ENCODE measurements at regions of chr2 and their contacts with region 1.

Region 1: DNA sequence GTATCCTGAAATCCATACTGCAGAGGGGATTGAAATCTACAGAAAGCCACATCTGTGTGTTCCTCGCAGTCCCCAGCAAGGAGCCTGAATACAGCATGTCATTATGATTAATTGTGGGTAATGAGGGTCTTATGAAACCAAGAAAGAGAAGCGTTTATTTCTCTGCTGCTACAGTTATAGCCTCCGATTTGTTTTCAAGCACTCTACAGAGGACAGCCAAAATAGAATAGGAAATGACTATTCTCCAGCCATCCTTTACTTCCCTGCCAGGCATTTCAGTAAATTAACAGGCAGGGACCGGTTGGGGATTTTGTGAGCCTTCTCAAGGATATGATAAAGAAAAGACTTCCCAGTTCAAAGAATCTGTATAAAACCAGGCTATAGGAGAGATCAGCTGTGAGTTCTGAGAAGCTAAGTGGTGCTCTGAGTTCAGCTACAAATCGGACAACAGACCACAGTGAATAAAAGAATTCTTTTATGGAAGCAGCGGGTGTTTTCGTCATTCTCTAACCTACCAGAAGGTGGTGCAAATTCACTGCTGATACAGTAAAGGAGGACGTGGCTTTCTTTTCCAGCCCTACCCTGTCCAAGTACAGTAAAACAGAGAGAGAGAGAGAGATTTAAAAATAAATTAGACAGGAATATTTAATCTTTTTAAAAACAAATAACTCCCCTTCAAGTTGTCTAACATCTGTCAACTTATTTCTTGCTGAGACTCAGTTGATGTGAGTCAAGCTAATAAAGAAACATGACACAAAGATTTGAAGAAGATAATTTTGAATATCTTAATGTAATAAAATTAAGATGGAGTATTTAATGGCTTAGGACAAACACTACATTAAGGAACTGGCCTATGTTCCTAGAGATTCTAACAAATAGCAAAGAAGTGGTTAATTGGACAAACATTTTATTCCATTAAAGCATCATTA is 133.7 kb downstream of the INSIG2 start:
- DNase-seq: peak; percentile 49 to 64
- H3K4me3 ChIP-seq: no peak overlapping the region
- H3K27ac ChIP-seq: no peak overlapping the region
- H3K4me1 ChIP-seq: peaks cover 4% of the 10 kb centered on the region
- H3K27me3 ChIP-seq: no peaks in the 10 kb centered on the region
- CTCF ChIP-seq: peak; percentile 91

Region 2: GRCh38 chr2:117972425-117973138 is 249.3 kb before region 1 on chr2:
- CTCF ChIA-PET with region 1: no interaction called
- POLR2A ChIA-PET with region 1: no interaction called
- intact Hi-C with region 1: no loop called
- DNase-seq: peak in 1 of 2 experiments; percentile 44
- H3K4me3 ChIP-seq: no peak overlapping the region
- H3K27ac ChIP-seq: no peak overlapping the region
- H3K4me1 ChIP-seq: no peaks in the 10 kb centered on the region
- H3K27me3 ChIP-seq: no peaks in the 10 kb centered on the region
- CTCF ChIP-seq: no peak

Region 3: GRCh38 chr2:118207889-118208288 is 14.0 kb before region 1 on chr2:
- CTCF ChIA-PET with region 1: no interaction called
- POLR2A ChIA-PET with region 1: no interaction called
- intact Hi-C with region 1: no loop called
- DNase-seq: no peak
- H3K4me3 ChIP-seq: no peak overlapping the region
- H3K27ac ChIP-seq: no peak overlapping the region
- H3K4me1 ChIP-seq: peaks cover 16% of the 10 kb centered on the region
- H3K27me3 ChIP-seq: no peaks in the 10 kb centered on the region
- CTCF ChIP-seq: no peak

Region 4: DNA sequence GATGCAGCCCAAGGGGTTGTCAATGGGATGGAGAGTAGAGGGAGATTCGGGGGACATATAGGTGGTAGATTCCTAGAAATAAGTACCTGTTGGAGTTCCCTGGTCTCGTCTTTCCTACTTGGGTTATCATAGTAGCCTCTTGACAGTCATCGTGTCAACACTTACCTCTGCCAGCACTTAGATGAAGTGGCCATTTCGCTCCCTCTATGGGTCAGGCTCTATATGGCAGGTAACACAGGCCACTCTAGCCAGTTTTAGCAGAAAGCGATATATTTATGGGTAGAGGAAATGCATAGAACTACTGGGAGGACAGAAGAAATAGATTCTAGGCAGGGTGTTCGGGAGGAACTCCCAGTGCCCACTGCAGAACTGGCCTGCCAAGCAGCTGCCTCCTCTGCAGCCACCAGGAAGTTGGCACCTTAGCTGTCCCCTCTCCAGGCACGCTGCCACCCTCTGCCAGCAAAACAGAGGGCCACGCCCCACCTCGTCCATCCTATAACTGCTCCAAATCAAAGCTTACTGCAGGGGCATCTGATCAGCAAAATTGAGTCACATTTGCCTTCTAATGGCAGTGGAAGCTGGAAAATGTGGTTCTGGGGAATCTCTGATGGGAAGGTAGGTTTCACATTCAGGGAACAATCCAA is 47.6 kb after region 1 on chr2:
- CTCF ChIA-PET with region 1: interaction called, 9 read pairs
- POLR2A ChIA-PET with region 1: no interaction called
- intact Hi-C with region 1: loop called (anchors 1 kb)
- DNase-seq: peak in 1 of 2 experiments; percentile 16
- H3K4me3 ChIP-seq: no peak overlapping the region
- H3K27ac ChIP-seq: no peak overlapping the region
- H3K4me1 ChIP-seq: no peaks in the 10 kb centered on the region
- H3K27me3 ChIP-seq: no peaks in the 10 kb centered on the region
- CTCF ChIP-seq: peak; percentile 63

Measured in PC-9 (cell line).